Activated naive CD4-positive, alpha-beta T cell treated with anti-CD3 and anti-CD28 coated beads, Interleukin-2, amount 10 ng/mL, durations not matched to agents 7 days and 5 days (primary cell): ENCODE measurements at regions of chr12 and their contacts with region 1.

Region 1: GRCh38 chr12:49043856-49044258 is 16.7 kb downstream of the KMT2D start:
- DNase-seq: peak; percentile 87
- H3K4me3 Mint-ChIP-seq: no peak overlapping the region
- H3K27ac Mint-ChIP-seq: no peak overlapping the region
- H3K4me1 Mint-ChIP-seq: peaks cover 6% of the 10 kb centered on the region
- H3K27me3 Mint-ChIP-seq: no peaks in the 10 kb centered on the region

Region 2: DNA sequence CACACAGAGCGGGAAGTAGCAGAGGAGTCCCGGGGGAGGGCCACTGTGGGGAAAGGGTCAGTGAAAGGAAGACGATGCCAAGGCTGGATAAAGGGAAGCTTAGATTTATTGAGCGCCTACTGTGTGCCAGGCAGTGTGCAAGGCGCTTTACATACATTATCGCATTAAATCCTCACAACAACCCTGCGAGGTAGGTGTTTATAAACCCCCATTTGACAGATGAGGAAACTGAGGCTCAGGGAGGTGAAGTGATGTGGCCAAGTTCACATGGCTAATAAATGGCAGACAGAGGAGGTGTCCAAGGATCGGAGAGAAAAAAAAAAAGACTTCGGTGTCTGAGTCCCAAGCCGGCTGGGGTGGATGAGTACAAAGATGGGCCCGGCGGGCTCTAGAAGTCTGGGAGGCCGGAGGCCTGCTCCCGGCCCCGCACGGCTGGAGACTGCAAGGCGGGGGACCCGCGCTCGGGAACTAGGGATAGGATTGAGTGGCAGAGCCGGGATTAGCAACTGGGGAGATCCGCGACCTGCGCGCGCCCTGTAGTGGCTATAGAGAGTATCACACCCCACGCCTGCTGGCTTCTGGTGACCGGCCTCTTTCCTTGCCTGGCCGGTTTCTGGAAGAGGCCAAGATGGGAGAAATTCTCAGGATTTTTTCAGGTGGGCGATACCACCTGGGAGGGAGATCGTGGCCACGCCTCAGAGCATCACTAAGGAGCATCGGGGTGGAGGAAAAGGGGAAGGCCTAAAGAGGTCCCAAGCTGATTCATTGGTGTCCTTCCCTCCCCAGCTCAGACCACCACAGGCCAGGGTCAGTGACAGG is 48.6 kb before region 1 on chr12:
- CTCF ChIA-PET with region 1: interaction called, 18 read pairs
- DNase-seq: peak; percentile 67
- H3K4me3 Mint-ChIP-seq: peak overlapping the region; percentile 13
- H3K27ac Mint-ChIP-seq: no peak overlapping the region
- H3K4me1 Mint-ChIP-seq: peaks cover 32% of the 10 kb centered on the region
- H3K27me3 Mint-ChIP-seq: peaks cover 95% of the 10 kb centered on the region

Region 3: DNA sequence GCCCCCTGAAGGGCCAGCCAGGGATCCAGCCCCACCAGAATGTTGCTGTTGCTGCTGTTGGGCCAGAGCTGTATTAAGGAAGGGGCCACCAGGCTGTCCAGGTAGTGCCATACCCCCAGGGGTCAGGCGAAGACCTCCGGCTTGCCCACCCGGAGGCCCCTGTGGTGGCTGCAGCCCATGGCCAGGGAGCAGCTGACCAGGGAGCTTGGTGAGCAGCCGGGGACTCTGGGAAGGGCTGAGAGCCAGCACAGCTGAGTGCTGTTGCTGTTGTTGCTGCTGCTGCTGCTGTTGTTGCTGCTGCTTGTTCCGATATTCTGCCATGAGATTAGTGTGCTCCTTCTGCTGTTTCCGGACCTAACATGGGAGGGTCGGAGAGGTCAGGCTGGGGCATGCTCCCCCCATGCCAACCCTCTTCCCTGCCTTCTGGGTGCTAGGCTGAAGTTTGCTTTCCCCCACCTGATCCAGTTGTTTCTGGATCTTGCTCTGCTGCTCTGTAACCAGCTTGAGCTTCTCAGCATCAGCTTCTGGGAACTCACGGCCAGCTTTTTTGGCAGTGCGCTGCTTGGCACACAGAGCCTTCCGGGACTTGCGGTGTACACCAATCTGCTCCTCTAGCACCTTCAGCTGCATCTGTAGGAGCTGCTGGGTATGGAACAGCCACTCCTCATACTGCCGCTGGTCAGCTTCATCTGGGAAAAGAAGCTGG is 10.1 kb before region 1 on chr12:
- CTCF ChIA-PET with region 1: interaction called, 22 read pairs
- DNase-seq: no peak
- H3K4me3 Mint-ChIP-seq: no peak overlapping the region
- H3K27ac Mint-ChIP-seq: no peak overlapping the region
- H3K4me1 Mint-ChIP-seq: peaks cover 4% of the 10 kb centered on the region
- H3K27me3 Mint-ChIP-seq: no peaks in the 10 kb centered on the region

Region 4: DNA sequence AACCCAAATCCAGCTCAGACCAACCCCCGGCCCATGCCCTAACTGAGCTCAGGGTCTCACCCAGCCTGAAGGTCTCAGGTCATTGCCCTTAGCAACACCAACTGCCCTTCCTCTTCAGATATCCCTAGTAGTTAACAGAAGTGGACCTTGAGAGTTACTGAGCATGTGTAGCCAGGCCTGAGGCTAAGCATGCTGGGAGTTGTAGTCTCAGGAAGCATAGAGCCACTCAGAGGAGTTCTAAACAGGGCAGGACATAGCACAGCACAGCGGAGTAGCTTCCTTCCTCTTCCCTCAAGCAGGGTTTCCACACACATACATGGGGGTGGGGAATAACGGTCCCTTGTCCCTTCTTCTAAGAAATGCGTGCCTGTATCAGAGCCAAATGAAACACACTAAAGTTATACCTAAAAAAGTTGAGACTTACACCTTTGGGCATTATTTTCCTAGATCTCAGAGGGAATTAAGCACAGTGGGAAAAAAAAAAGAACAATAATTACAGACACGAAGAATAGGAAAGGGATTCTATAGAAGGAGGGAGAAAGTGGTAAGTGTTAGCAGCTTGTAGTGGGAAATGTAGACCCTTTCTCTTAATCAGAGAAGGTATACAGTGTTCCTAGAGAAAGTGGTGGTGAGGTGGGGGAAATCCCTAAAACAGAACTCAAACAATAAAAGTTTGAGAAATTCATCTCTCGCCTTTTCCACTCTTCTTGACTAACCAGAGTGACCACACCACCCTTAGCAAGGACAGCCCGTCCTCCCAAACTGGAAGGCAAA is 12.3 kb after region 1 on chr12:
- CTCF ChIA-PET with region 1: interaction called, 18 read pairs
- DNase-seq: peak; percentile 72
- H3K4me3 Mint-ChIP-seq: peak overlapping the region; percentile 92
- H3K27ac Mint-ChIP-seq: peak overlapping the region; percentile 56
- H3K4me1 Mint-ChIP-seq: peaks cover 48% of the 10 kb centered on the region
- H3K27me3 Mint-ChIP-seq: peaks cover 5% of the 10 kb centered on the region

Region 5: GRCh38 chr12:49069507-49070346 is 25.9 kb after region 1 on chr12 and contains the start of gene RHEBL1:
- CTCF ChIA-PET with region 1: interaction called, 12 read pairs
- DNase-seq: peak; percentile 99
- H3K4me3 Mint-ChIP-seq: peak within 1 kb of the TSS; percentile 89
- H3K27ac Mint-ChIP-seq: peak within 1 kb of the TSS; percentile 90
- H3K4me1 Mint-ChIP-seq: peaks cover 24% of the 10 kb centered on the region
- H3K27me3 Mint-ChIP-seq: no peaks in the 10 kb centered on the region

Region 6: DNA sequence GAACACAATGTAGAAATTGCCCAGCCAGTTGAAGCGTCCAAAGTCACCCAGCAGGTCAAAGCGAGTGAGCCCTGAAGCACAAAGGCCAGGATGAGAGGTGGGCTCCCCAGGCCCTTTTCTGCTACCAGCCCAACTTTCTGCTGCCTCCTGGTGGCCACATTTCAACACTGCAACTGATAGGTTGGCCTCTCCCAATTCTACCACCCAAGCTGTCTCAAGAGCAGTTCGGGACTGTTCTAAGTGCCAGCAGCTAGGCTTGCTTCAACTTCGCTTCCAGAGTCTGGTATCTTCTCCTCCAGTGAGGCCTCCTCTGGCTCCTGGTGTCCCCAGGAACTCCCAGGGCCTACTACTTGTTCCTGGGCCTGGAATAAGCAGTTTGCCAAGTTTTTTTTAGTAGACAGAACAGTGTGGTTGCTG is 54.2 kb after region 1 on chr12:
- CTCF ChIA-PET with region 1: interaction called, 10 read pairs
- DNase-seq: peak; percentile 74
- H3K4me3 Mint-ChIP-seq: no peak overlapping the region
- H3K27ac Mint-ChIP-seq: no peak overlapping the region
- H3K4me1 Mint-ChIP-seq: peaks cover 18% of the 10 kb centered on the region
- H3K27me3 Mint-ChIP-seq: peaks cover 32% of the 10 kb centered on the region

Region 7: DNA sequence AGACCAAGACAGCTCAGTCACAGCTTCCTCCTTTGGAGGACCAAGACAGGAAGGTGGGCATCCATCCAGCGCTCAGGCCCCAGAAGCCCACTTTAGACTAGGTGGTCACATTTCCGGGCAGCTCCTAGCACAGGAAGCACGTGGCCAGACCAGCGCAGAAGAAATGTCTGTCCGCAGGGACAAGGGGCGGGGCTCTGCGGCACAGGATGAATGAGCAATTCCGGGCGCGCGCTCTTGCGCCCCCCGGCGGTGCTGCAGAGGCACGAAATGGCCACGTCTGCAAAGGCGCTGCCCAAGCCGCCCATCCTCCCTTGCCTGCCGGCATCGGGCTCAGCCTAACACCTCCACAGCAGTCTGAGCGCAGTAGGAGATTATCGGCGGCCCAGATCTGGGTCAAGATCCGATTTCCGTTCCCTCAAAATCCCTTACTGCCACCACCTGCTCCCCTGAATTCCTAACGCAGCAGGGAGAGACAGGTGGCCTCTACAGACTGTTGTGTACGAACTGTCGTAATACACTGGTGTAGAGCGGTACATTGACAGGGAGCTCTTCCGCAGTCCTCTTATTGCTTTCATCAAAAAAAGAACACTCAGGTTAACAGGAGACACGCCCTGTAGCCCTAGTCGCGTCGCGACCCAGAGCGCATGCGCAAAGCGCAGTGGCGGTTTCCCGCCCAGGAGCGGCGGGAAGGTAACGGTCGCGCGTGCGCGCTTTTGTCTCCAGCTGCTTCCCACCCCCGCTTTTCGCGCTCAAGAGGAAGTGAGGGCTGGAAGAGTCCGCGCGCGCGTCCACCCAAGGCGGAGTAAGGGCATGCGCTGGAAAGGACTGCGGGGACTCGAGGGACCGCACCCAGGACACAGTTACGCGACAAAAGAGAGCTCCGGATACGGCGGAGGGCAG is 86.5 kb after region 1 on chr12:
- CTCF ChIA-PET with region 1: no interaction called
- DNase-seq: peak; percentile 93
- H3K4me3 Mint-ChIP-seq: peak overlapping the region; percentile 96
- H3K27ac Mint-ChIP-seq: peak overlapping the region; percentile 99
- H3K4me1 Mint-ChIP-seq: peaks cover 56% of the 10 kb centered on the region
- H3K27me3 Mint-ChIP-seq: peaks cover 12% of the 10 kb centered on the region